ENCODE measurements at regions of chr10 and their contacts with region 1.

Region 1: GRCh38 chr10:102678842-102679289 is 34.6 kb downstream of the TRIM8 start:
- DNase-seq: no peak
- ATAC-seq: no peak
- H3K4me3 Mint-ChIP-seq: no peak overlapping the region
- H3K27ac Mint-ChIP-seq: no peak overlapping the region
- H3K4me1 Mint-ChIP-seq: peaks cover 42% of the 10 kb centered on the region
- H3K27me3 Mint-ChIP-seq: no peaks in the 10 kb centered on the region

Region 2: GRCh38 chr10:101704331-101704730 is 974.5 kb before region 1 on chr10:
- CTCF ChIA-PET with region 1: no interaction called
- DNase-seq: no peak
- ATAC-seq: no peak
- H3K4me3 Mint-ChIP-seq: no peak overlapping the region
- H3K27ac Mint-ChIP-seq: no peak overlapping the region
- H3K4me1 Mint-ChIP-seq: peaks cover 31% of the 10 kb centered on the region
- H3K27me3 Mint-ChIP-seq: peaks cover 34% of the 10 kb centered on the region

Region 3: GRCh38 chr10:102660888-102661657 is 17.8 kb before region 1 on chr10:
- CTCF ChIA-PET with region 1: interaction called, 23 read pairs
- DNase-seq: peak; percentile 88
- ATAC-seq: peak; percentile 88
- H3K4me3 Mint-ChIP-seq: peak overlapping the region; percentile 42
- H3K27ac Mint-ChIP-seq: peak overlapping the region; percentile 87
- H3K4me1 Mint-ChIP-seq: peaks cover 57% of the 10 kb centered on the region
- H3K27me3 Mint-ChIP-seq: no peaks in the 10 kb centered on the region

Measured in activated CD8-positive, alpha-beta memory T cell treated with anti-CD3 and anti-CD28 coated beads, Interleukin-2, amount 10 ng/mL, durations not matched to agents 7 days and 5 days (primary cell).